Spleen (tissue), 13 donors: ENCODE measurements at regions of chr2 and their contacts with region 1.

Region 1: GRCh38 chr2:189412330-189412953 is 28.8 kb upstream of the WDR75 start:
- DNase-seq: no peak
- H3K4me3 ChIP-seq: no peak overlapping the region
- H3K27ac ChIP-seq: no peak overlapping the region
- H3K4me1 ChIP-seq: peaks cover 0 to 4% (median 0%) of the 10 kb centered on the region in 6 donors
- H3K27me3 ChIP-seq: no peaks in the 10 kb centered on the region
- CTCF ChIP-seq: peak; percentile 34 to 77 (median 71)
- POLR2A ChIP-seq: no peak

Region 2: DNA sequence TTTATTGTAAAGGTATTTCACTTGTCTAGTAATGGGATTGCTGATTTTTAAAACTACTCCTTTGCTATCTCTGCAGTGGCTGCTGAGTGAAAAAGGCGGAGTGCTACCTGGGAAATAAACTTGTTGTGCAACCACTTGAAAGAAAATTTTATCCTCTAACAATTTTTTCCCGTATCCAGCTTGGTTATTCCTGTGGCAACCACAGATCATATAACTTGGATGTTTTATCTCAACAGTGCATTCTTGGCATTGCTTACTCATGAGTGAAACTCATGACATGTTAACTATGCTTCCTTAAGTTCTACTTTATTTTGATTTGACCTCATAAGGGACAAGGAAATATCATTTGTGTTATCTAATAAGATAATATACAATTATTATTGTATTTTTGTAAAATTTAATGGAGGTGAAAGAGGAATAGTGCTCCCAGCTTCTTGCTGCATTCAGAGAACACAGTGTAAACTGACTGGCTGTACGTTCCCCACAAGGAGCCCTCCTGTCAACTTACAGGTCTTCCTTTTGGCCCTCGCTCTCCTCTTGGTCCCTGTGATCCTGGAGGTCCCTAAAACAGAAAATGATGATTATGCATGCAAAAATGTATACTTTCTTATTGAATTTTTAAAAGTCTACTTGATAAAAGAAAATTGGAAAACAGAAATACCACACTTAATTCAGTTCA is 315.5 kb before region 1 on chr2:
- intact Hi-C with region 1: loop called (anchors 5 kb)
- DNase-seq: no peak
- H3K4me3 ChIP-seq: no peak overlapping the region
- H3K27ac ChIP-seq: no peak overlapping the region
- H3K4me1 ChIP-seq: no peaks in the 10 kb centered on the region
- H3K27me3 ChIP-seq: no peaks in the 10 kb centered on the region
- CTCF ChIP-seq: no peak
- POLR2A ChIP-seq: no peak

Region 3: GRCh38 chr2:189327879-189328847 is 84.3 kb before region 1 on chr2:
- intact Hi-C with region 1: no loop called
- DNase-seq: no peak
- H3K4me3 ChIP-seq: no peak overlapping the region
- H3K27ac ChIP-seq: no peak overlapping the region
- H3K4me1 ChIP-seq: no peaks in the 10 kb centered on the region
- H3K27me3 ChIP-seq: no peaks in the 10 kb centered on the region
- CTCF ChIP-seq: no peak
- POLR2A ChIP-seq: no peak

Region 4: GRCh38 chr2:189641590-189641989 is 229.1 kb after region 1 on chr2:
- intact Hi-C with region 1: no loop called
- DNase-seq: no peak
- H3K4me3 ChIP-seq: no peak overlapping the region
- H3K27ac ChIP-seq: no peak overlapping the region
- H3K4me1 ChIP-seq: no peaks in the 10 kb centered on the region
- H3K27me3 ChIP-seq: no peaks in the 10 kb centered on the region
- CTCF ChIP-seq: no peak
- POLR2A ChIP-seq: no peak